Activated CD8-positive, alpha-beta T cell treated with anti-CD3 and anti-CD28 coated beads for 36 hours (primary cell): ENCODE measurements at regions of chr3 and their contacts with region 1.

Region 1: DNA sequence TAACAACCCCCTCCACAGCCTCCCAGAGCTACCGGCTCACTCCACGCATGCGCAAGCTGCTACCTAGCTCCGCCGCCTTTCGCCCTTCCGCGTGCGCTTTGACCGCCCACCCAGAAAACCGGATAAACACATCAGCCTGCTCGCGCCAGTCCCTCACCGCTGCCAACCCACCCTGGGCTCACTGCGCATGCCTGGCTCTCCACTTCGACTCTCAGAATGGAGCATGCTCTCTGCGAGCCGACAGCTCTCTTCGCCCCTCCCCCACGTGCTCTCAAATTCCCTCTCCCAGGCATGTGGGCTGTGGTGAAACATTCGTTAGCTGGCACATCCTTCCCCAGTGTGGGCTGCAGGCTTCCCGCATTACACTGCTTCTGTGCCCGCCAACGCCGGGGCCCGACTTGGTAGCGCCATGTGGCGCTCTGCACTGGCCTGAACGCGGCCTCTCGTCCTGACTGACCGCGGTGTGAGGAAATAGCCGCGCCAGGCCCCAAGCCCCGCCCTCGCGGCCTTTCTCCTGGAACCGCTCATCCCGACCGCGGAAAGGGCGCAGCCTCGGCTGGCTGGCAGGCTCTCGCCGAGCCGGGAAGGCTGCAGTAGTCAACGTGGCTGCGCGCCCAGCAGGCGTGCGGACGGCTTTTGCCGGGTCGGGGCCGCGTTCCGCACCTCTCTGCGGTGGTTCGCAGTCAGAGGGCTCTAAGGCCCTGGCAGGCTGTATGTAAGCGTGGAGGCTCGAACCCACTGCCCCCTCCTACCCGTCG is 445 bp upstream of the MSL2 start:
- DNase-seq: peak; percentile 100
- ATAC-seq: peak; percentile 79
- H3K4me3 Mint-ChIP-seq: peak overlapping the region; percentile 98
- H3K27ac Mint-ChIP-seq: peak overlapping the region; percentile 98
- H3K4me1 Mint-ChIP-seq: peaks cover 22% of the 10 kb centered on the region
- H3K27me3 Mint-ChIP-seq: peaks cover 3% of the 10 kb centered on the region
- CTCF ChIP-seq: no peak

Region 2: DNA sequence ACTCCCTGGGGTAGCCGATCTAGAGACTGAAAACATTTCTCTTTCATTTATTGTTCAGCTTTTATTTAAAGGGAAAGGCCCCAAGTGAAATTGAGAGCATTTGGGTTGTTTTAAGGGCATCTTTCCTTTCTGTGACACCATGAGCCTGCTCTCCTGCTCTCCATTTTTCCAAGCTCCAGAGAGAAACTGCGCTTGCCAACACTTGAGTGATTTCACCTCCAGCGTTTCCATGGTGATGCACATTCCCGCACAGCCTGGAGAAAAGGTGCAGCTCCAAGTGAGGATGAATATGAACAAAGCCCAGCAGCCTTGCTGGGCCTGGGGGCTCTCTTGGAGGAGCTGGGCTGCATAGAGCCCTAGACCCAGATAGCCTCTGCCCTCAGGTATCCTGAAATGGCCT is 390.3 kb before region 1 on chr3:
- CTCF ChIA-PET with region 1: no interaction called
- POLR2A ChIA-PET with region 1: no interaction called
- intact Hi-C with region 1: no loop called
- DNase-seq: no peak
- ATAC-seq: no peak
- H3K4me3 Mint-ChIP-seq: no peak overlapping the region
- H3K27ac Mint-ChIP-seq: no peak overlapping the region
- H3K4me1 Mint-ChIP-seq: no peaks in the 10 kb centered on the region
- H3K27me3 Mint-ChIP-seq: no peaks in the 10 kb centered on the region
- CTCF ChIP-seq: no peak

Region 3: GRCh38 chr3:136075218-136075808 is 121.3 kb before region 1 on chr3:
- CTCF ChIA-PET with region 1: interaction called, 3 read pairs
- POLR2A ChIA-PET with region 1: no interaction called
- intact Hi-C with region 1: loop called (anchors 5 kb)
- DNase-seq: peak; percentile 80
- ATAC-seq: peak; percentile 53
- H3K4me3 Mint-ChIP-seq: no peak overlapping the region
- H3K27ac Mint-ChIP-seq: no peak overlapping the region
- H3K4me1 Mint-ChIP-seq: no peaks in the 10 kb centered on the region
- H3K27me3 Mint-ChIP-seq: no peaks in the 10 kb centered on the region
- CTCF ChIP-seq: peak; percentile 88

Region 4: DNA sequence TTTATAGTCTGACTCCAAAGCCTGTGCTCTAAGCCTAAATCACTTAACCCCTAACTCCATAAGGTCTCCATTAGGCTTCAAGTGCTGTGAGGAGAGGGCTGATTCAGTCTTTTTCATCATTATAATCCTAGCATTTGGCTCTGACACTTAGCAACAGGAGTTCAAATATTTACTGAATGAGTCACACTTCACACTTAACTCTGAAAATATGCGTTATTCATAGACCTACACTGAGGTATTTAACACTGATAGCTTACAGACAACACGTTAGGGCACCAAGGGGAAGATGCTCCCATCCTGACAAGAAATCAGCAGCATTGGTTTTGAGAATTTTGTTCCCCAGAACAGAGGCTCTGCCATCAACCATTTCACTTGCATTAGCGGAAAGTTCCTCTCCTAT is 54.0 kb before region 1 on chr3:
- CTCF ChIA-PET with region 1: no interaction called
- POLR2A ChIA-PET with region 1: interaction called, 6 read pairs
- intact Hi-C with region 1: loop called (anchors 5 kb)
- DNase-seq: no peak
- ATAC-seq: peak; percentile 83
- H3K4me3 Mint-ChIP-seq: no peak overlapping the region
- H3K27ac Mint-ChIP-seq: peak overlapping the region; percentile 63
- H3K4me1 Mint-ChIP-seq: peaks cover 35% of the 10 kb centered on the region
- H3K27me3 Mint-ChIP-seq: no peaks in the 10 kb centered on the region
- CTCF ChIP-seq: no peak

Region 5: DNA sequence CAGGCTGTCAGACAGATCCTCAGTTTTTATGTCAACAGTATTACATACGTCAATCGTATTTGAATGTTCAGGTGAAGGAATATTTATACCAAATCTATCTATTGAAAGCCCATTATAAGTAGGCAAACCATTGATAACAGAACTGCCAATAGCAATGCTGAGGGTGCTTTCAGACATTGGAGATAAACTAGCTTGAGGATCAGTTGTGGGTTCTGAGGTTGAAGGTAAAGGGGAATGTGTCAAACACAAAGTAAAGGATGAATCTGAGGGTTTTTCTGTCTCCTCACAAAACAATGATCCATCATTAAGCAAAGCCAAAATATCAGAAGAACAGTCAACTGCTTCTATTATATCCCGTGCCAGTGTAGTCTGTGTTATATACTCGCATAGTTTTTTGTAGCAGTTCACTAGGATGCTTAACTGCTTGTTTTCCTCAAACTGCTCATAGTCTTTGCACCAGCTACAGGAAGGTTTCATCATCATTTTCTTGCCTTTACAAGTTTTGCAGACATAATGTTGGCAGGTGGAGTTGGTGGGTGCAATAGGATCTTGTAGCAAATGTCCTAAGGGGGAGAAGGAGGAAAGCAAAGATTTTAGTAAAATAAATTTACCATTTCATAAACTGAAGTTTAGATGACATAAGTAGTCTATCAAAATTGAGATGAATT is 44.3 kb before region 1 on chr3:
- CTCF ChIA-PET with region 1: no interaction called
- POLR2A ChIA-PET with region 1: interaction called, 10 read pairs
- intact Hi-C with region 1: no loop called
- DNase-seq: no peak
- ATAC-seq: peak; percentile 21
- H3K4me3 Mint-ChIP-seq: no peak overlapping the region
- H3K27ac Mint-ChIP-seq: peak overlapping the region; percentile 47
- H3K4me1 Mint-ChIP-seq: peaks cover 64% of the 10 kb centered on the region
- H3K27me3 Mint-ChIP-seq: no peaks in the 10 kb centered on the region
- CTCF ChIP-seq: no peak

Region 6: GRCh38 chr3:136186344-136186743 is 10.2 kb before region 1 on chr3:
- CTCF ChIA-PET with region 1: interaction called, 5 read pairs
- POLR2A ChIA-PET with region 1: interaction called, 87 read pairs
- intact Hi-C with region 1: no loop called
- DNase-seq: peak; percentile 48
- ATAC-seq: peak; percentile 64
- H3K4me3 Mint-ChIP-seq: no peak overlapping the region
- H3K27ac Mint-ChIP-seq: peak overlapping the region; percentile 50
- H3K4me1 Mint-ChIP-seq: peaks cover 78% of the 10 kb centered on the region
- H3K27me3 Mint-ChIP-seq: no peaks in the 10 kb centered on the region
- CTCF ChIP-seq: no peak

Region 7: GRCh38 chr3:136250226-136250902 is 53.8 kb after region 1 on chr3 and contains the start of gene PCCB:
- CTCF ChIA-PET with region 1: interaction called, 8 read pairs
- POLR2A ChIA-PET with region 1: interaction called, 13 read pairs
- intact Hi-C with region 1: loop called (anchors 2 kb)
- DNase-seq: peak; percentile 96
- ATAC-seq: peak; percentile 98
- H3K4me3 Mint-ChIP-seq: peak within 1 kb of the TSS; percentile 84
- H3K27ac Mint-ChIP-seq: peak within 1 kb of the TSS; percentile 96
- H3K4me1 Mint-ChIP-seq: peaks cover 16% of the 10 kb centered on the region
- H3K27me3 Mint-ChIP-seq: no peaks in the 10 kb centered on the region
- CTCF ChIP-seq: peak; percentile 83
- total RNA-seq, gene PCCB: 61.5 to 61.8 TPM